ENCODE measurements at regions of chr9 and their contacts with region 1.

Region 1: GRCh38 chr9:34899535-34900158 is 58.4 kb upstream of the PHF24 start:
- DNase-seq: peak; percentile 85
- H3K4me3 Mint-ChIP-seq: no peak overlapping the region
- H3K27ac Mint-ChIP-seq: no peak overlapping the region
- H3K4me1 Mint-ChIP-seq: no peaks in the 10 kb centered on the region
- H3K27me3 Mint-ChIP-seq: peaks cover 82% of the 10 kb centered on the region
- CTCF ChIP-seq: peak; percentile 83

Region 2: GRCh38 chr9:34710023-34710422 is 189.6 kb before region 1 on chr9 and contains the start of gene CCL21:
- CTCF ChIA-PET with region 1: no interaction called
- POLR2A ChIA-PET with region 1: no interaction called
- intact Hi-C with region 1: no loop called
- DNase-seq: no peak
- H3K4me3 Mint-ChIP-seq: no peak within 1 kb of the TSS
- H3K27ac Mint-ChIP-seq: no peak within 1 kb of the TSS
- H3K4me1 Mint-ChIP-seq: no peaks in the 10 kb centered on the region
- H3K27me3 Mint-ChIP-seq: peaks cover 29% of the 10 kb centered on the region
- CTCF ChIP-seq: no peak
- total RNA-seq, gene CCL21: not detected in 2 replicates

Region 3: DNA sequence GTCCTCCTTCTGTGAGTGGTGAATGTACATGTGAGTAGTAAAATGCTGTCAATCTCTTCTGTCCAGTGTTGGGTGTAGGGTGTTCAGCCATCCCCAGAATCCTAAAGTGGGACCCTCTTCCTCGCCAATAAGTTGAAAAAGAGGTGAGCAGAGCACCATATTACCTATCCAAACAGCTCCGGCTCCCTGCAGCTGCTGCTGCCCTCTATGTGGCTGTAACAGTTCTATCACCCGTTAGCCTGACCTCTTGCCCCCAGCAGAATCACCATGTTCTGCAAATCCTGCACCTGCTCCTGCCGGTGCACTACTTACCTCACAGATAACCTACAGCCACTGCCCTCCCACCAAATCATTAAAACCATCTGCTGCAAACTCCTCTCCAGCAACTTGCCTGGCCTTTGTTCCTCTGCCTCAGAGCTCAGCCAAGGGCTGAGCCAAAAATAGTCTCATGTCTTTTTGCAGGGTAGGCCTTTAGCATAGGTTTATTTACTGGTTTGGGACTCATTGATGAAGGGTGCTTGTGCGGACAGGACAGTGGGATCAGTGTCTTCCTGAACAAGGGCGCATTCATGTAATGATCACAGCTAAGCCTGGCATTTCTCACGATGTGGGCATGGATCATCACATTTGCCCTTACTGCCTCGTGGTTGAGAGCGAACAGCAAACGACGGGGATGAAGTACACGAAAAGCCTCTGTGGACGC is 140.1 kb before region 1 on chr9:
- CTCF ChIA-PET with region 1: interaction called, 11 read pairs
- POLR2A ChIA-PET with region 1: no interaction called
- intact Hi-C with region 1: loop called (anchors 10 kb)
- DNase-seq: no peak
- H3K4me3 Mint-ChIP-seq: no peak overlapping the region
- H3K27ac Mint-ChIP-seq: no peak overlapping the region
- H3K4me1 Mint-ChIP-seq: no peaks in the 10 kb centered on the region
- H3K27me3 Mint-ChIP-seq: peaks cover 40% of the 10 kb centered on the region
- CTCF ChIP-seq: no peak

Region 4: GRCh38 chr9:34809504-34810186 is 90.0 kb before region 1 on chr9:
- CTCF ChIA-PET with region 1: no interaction called
- POLR2A ChIA-PET with region 1: no interaction called
- intact Hi-C with region 1: no loop called
- DNase-seq: no peak
- H3K4me3 Mint-ChIP-seq: no peak overlapping the region
- H3K27ac Mint-ChIP-seq: no peak overlapping the region
- H3K4me1 Mint-ChIP-seq: no peaks in the 10 kb centered on the region
- H3K27me3 Mint-ChIP-seq: peaks cover 55% of the 10 kb centered on the region
- CTCF ChIP-seq: no peak

Region 5: DNA sequence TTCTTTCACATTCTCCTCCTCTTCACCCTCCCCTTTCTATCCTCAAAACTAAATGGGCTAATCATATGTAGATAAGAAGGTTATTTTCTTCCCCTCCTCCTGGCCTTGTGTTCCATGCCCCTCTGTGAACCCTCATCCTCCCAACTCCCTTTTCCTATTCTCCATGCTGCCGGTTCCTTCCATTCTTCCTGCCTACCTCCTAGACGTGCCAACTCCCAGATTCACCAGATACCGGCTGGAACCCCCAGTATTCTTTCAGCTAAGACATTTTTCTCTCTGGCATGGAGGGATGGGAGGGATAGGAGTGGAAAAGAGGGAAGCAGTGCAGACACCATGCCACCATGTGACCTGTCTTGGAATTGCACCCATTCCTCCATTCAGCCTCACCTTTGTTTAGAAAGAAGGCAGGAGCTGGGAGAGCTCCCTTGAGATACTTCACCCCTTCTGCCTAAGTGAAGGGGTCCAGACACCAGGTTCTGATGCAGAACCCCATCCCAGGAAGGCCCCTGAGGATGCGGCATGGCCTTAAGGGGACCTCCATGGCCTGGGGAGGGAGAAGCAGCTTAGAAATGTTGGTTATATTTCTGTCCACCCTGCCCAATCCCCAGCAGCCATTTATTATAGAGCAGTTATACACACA is 94.7 kb after region 1 on chr9:
- CTCF ChIA-PET with region 1: interaction called, 76 read pairs
- POLR2A ChIA-PET with region 1: interaction called, 7 read pairs
- intact Hi-C with region 1: loop called (anchors 1 kb)
- DNase-seq: peak; percentile 77
- H3K4me3 Mint-ChIP-seq: no peak overlapping the region
- H3K27ac Mint-ChIP-seq: no peak overlapping the region
- H3K4me1 Mint-ChIP-seq: peaks cover 38% of the 10 kb centered on the region
- H3K27me3 Mint-ChIP-seq: no peaks in the 10 kb centered on the region
- CTCF ChIP-seq: peak; percentile 76

Region 6: GRCh38 chr9:35051069-35051967 is 151.7 kb after region 1 on chr9:
- CTCF ChIA-PET with region 1: interaction called, 44 read pairs
- POLR2A ChIA-PET with region 1: interaction called, 10 read pairs
- intact Hi-C with region 1: loop called (anchors 1 kb)
- DNase-seq: peak; percentile 72
- H3K4me3 Mint-ChIP-seq: no peak overlapping the region
- H3K27ac Mint-ChIP-seq: peak overlapping the region; percentile 10
- H3K4me1 Mint-ChIP-seq: peaks cover 5% of the 10 kb centered on the region
- H3K27me3 Mint-ChIP-seq: no peaks in the 10 kb centered on the region
- CTCF ChIP-seq: peak; percentile 42

Region 7: GRCh38 chr9:35116898-35117551 is 217.4 kb after region 1 on chr9:
- CTCF ChIA-PET with region 1: interaction called, 5 read pairs
- POLR2A ChIA-PET with region 1: no interaction called
- intact Hi-C with region 1: loop called (anchors 1 kb)
- DNase-seq: peak; percentile 94
- H3K4me3 Mint-ChIP-seq: peak overlapping the region; percentile 88
- H3K27ac Mint-ChIP-seq: no peak overlapping the region
- H3K4me1 Mint-ChIP-seq: peaks cover 31% of the 10 kb centered on the region
- H3K27me3 Mint-ChIP-seq: no peaks in the 10 kb centered on the region
- CTCF ChIP-seq: peak; percentile 95

Region 8: DNA sequence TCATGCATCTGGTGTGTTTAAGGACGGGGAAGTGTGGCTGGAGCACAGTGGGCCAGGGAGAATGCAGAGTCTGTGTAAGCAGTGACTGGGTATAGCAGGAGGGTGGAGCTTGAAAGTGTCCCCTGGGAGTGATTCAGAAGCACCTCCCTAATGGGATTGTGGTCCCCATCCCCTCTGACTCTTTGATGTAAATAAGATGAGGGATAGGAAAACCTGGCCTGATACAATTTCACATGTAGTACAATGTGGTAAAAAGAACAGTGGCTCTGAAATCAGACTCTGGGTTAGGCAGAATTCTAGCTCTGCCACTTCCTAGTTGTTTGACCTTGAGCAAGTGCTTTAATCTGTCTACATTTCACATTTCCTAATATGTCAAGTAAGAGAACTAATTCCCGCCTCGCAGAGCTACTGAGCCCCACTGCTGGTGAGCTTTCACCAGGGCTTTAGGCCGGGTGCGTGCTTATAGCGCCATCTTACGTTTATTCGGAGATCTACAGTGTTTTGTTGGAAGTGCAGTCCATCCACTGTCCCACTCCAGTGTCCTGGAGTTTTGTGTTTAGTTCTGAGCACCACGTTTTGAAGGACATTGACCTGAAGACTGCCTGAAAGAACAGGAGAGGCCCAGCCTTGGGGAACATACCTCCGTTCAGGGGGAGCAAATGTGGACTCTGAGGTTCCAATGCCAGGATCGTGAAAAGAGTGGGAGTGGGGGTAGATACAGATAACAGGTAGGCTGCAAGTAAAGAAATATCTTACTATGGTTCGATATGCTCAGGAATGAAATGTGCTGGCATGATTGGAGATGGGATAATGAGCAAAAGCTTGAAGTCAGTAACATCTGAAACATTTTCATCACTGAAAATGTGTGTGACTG is 654.3 kb after region 1 on chr9:
- CTCF ChIA-PET with region 1: no interaction called
- POLR2A ChIA-PET with region 1: no interaction called
- intact Hi-C with region 1: loop called (anchors 10 kb)
- DNase-seq: peak; percentile 78
- H3K4me3 Mint-ChIP-seq: no peak overlapping the region
- H3K27ac Mint-ChIP-seq: no peak overlapping the region
- H3K4me1 Mint-ChIP-seq: peaks cover 12% of the 10 kb centered on the region
- H3K27me3 Mint-ChIP-seq: no peaks in the 10 kb centered on the region
- CTCF ChIP-seq: peak; percentile 90

Measured in MCF 10A (cell line).